ENCODE measurements at regions of chr20 and their contacts with region 1.

Region 1: DNA sequence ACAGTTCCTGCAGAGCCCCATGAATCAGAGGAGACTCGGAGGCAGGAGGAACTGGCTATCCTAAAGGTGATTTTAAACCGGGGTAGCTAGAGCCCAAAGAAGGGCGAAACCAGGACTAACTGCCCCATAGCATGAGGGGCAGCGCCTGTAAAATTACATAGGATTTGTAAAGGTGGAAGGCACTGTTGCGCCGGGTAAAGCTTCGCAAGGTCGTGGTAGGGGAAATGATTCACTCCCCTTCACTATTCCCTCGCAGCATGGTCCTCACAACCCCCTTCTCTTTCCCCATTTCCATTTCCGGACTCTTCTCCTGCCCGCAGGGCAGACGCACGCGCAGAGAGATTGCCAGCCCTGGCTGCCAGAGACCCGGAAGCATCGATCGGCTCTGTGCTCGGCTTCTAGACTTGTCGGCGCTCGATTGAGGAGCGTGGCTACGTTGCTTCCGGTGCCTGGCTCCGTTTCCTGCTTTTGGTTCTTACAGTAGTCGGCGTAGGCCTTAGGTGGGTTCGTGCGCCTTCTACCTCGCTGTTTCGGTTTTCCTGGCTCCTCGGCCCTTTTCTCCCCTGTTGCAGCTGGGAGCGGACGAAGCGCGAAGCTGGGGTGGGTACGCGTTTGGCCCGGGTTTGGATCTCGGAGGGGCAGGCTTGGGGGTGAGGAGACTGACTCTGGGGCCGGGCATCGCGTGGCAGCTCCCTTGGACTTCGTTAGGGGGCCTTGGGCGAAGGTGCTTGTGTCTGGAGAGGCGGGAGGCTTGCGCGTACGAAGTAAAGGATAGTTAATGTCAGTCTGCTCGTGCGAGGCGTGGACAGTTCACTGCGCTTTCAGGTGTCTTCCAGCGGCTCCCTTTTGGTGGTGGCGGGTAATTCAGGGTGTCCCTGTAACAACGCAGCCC is at the start of gene SNRPB2:
- DNase-seq: peak; percentile 88
- H3K4me3 Mint-ChIP-seq: peak within 1 kb of the TSS; percentile 99
- H3K27ac Mint-ChIP-seq: peak within 1 kb of the TSS; percentile 97
- H3K4me1 Mint-ChIP-seq: peaks cover 45% of the 10 kb centered on the region
- H3K27me3 Mint-ChIP-seq: peaks cover 16% of the 10 kb centered on the region
- total RNA-seq, gene SNRPB2: 115 and 125 TPM in 2 replicates

Region 2: GRCh38 chr20:16573001-16573965 is 156.5 kb before region 1 on chr20 and contains the start of gene KIF16B:
- intact Hi-C with region 1: loop called (anchors 2 kb)
- DNase-seq: peak; percentile 80
- H3K4me3 Mint-ChIP-seq: peak within 1 kb of the TSS; percentile 90
- H3K27ac Mint-ChIP-seq: peak within 1 kb of the TSS; percentile 81
- H3K4me1 Mint-ChIP-seq: peaks cover 26% of the 10 kb centered on the region
- H3K27me3 Mint-ChIP-seq: no peaks in the 10 kb centered on the region
- total RNA-seq, gene KIF16B: 6.2 and 6.8 TPM in 2 replicates

Region 3: GRCh38 chr20:16709017-16709416 is 20.8 kb before region 1 on chr20:
- intact Hi-C with region 1: loop called (anchors 1 kb)
- DNase-seq: peak; percentile 13
- H3K4me3 Mint-ChIP-seq: no peak overlapping the region
- H3K27ac Mint-ChIP-seq: no peak overlapping the region
- H3K4me1 Mint-ChIP-seq: peaks cover 35% of the 10 kb centered on the region
- H3K27me3 Mint-ChIP-seq: peaks cover 27% of the 10 kb centered on the region

Region 4: DNA sequence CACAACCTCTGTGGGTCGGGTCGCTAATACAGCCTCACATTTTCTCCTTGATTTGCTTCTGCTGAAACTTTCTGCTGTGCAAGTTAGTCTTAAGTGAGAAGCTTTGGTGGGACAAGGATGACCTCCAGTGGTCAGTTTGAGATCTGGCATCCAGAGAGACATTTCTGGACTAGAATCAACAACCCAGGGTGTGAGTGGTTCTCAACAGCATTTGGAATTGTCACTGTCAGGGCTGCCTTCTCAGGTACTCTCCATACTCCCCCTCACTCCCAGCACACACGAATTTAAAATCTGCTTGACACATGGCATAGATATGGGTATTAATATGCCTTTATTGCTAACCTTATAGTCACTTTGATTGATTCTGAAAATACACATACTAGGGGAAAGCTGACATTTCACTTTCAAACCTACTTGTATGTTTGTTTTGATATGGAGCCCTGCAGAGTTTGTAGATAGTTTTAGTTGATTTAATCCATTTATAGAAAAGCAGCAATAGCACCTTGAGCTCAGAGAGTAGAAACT is 31.6 kb after region 1 on chr20:
- intact Hi-C with region 1: loop called (anchors 1 kb)
- DNase-seq: peak; percentile 26
- H3K4me3 Mint-ChIP-seq: no peak overlapping the region
- H3K27ac Mint-ChIP-seq: no peak overlapping the region
- H3K4me1 Mint-ChIP-seq: peaks cover 8% of the 10 kb centered on the region
- H3K27me3 Mint-ChIP-seq: peaks cover 33% of the 10 kb centered on the region

Region 5: DNA sequence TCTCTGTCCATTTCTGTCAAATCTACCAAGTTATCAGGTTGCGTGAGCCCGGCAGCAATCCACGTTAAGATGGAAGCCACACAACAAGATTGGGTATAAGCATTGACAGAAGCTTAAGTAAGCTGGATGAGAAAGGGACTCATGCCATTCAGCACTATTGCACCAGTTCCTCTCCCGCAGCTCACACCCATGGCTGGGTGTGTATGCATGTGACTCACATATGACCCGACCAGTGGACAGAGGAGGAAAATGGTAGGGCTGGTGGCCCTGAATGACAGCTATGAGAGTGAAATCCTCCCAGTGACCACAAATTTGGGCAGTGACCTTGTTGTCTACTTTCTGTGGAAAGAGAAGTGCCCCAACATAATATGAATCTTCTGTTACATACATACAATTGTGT is 131.9 kb after region 1 on chr20:
- intact Hi-C with region 1: no loop called
- DNase-seq: no peak
- H3K4me3 Mint-ChIP-seq: no peak overlapping the region
- H3K27ac Mint-ChIP-seq: no peak overlapping the region
- H3K4me1 Mint-ChIP-seq: no peaks in the 10 kb centered on the region
- H3K27me3 Mint-ChIP-seq: no peaks in the 10 kb centered on the region